Left cardiac atrium (tissue), 4 donors: ENCODE measurements at regions of chr22 and their contacts with region 1.

Region 1: GRCh38 chr22:31229402-31230136 is 17.5 kb downstream of the LIMK2 start:
- DNase-seq: peak; percentile 60
- ATAC-seq: peak; percentile 64 to 74

Region 2: DNA sequence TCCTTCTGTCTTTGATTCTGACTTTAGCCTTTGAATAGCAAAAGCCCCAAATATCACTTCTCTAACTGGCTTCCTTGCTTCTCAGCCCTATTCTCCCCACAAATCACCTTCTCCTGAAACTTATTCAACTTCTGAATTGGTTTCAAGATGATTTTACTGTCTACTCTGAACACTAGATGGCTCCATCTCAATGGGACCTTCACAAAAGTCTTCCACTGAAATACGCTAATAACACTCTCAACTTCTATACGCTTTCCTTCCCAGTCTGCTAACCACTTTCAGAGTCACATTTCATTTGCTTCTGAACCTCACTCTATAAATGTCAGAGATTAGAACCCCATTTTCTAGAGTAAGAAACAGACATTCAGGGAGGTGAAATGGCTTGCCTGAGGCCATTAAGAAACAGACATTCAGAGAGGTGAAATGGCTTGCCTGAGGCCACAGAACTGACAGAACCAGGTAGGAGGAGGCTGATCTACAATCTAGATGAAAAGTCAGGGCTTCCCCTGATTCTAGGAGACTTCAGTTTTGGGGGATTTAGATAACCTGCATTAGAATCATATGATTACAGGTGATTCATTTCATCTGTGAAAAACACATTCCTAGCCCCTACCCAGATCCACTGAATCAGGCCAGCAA is 281.6 kb before region 1 on chr22:
- intact Hi-C with region 1: loop called in 1 of 2 experiments (anchors 10 kb)
- DNase-seq: no peak
- ATAC-seq: peak; percentile 56 to 64